ENCODE measurements at regions of chr6 and their contacts with region 1.

Region 1: GRCh38 chr6:158704181-158704822 is 54.4 kb downstream of the SYTL3 start:
- DNase-seq: no peak
- H3K4me3 ChIP-seq: peak overlapping the region; percentile 28 to 37
- H3K27ac ChIP-seq: peak overlapping the region; percentile 18
- H3K4me1 ChIP-seq: peaks cover 47% of the 10 kb centered on the region
- H3K27me3 ChIP-seq: no peaks in the 10 kb centered on the region
- CTCF ChIP-seq: peak; percentile 89 to 99 (median 94)
- POLR2A ChIP-seq: no peak

Region 2: DNA sequence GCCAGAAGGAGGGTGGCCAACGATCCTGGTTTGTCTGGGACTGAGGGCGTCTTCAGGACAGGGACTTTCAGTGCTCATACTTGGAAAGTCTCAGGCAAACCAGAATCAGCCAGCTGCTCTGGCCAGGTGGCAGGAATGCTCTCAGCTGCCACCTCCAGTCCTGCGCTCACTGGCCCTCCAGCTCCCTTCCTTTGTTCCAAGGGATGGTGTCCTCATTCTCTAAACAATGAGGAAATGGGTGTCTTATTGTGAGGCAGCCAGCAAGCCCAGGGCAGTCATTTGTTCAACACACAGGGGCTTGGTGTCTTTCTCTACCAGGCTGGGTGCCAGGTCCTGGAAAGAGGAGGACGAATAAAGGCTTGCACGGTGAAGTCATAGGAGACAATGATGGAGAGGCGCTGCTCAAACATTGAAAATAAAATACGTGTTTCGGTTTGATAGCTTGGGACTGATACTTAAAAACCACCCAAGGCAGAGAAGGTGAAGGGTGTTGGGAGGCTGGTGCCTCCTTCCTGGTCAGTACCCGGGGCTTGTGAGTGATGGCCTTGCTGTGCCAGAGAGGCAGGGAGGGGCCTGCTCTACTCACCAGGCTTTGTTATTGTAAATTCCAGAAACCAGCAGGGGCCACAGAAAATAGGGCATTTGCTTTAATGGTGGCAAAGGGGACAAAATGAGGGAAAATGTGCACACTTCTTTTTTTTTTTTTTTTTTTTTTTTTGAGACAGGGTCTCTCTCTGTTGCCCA is 155.7 kb before region 1 on chr6:
- intact Hi-C with region 1: no loop called
- DNase-seq: no peak
- H3K4me3 ChIP-seq: no peak overlapping the region
- H3K27ac ChIP-seq: no peak overlapping the region
- H3K4me1 ChIP-seq: no peaks in the 10 kb centered on the region
- H3K27me3 ChIP-seq: no peaks in the 10 kb centered on the region
- CTCF ChIP-seq: no peak
- POLR2A ChIP-seq: no peak

Region 3: DNA sequence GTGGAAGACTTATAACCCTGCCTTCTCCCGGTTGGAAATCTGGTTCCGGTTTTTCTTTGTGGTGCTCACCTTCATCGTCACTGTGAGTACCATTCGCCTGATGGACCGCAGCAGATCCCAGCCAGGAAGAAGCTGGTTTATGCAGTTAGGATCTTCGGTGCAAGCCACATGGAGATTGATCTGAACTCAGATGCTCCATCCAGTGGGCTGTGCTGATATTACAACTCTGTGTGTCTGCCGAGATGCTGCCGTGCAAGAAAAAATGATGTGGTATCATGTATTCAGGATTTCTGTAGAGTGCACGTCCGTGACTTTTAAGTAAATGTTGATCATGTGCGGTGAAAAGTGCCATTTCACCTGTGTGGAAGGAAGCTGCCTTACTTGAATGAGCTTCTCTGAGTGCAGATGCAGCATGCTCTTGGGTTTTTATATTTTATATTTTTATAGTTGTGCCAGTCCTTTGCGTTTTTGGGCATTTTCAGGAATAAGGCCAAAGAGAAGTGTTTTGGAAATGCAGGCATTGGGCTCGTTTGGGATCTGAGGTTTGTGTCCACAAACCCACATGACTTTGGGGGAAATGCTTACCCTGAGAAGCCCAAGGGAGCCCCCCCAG is 98.9 kb before region 1 on chr6:
- intact Hi-C with region 1: no loop called
- DNase-seq: peak in 1 of 2 donors; percentile 3
- H3K4me3 ChIP-seq: no peak overlapping the region
- H3K27ac ChIP-seq: no peak overlapping the region
- H3K4me1 ChIP-seq: no peaks in the 10 kb centered on the region
- H3K27me3 ChIP-seq: no peaks in the 10 kb centered on the region
- CTCF ChIP-seq: peak; percentile 60 to 71 (median 62)
- POLR2A ChIP-seq: no peak

Region 4: DNA sequence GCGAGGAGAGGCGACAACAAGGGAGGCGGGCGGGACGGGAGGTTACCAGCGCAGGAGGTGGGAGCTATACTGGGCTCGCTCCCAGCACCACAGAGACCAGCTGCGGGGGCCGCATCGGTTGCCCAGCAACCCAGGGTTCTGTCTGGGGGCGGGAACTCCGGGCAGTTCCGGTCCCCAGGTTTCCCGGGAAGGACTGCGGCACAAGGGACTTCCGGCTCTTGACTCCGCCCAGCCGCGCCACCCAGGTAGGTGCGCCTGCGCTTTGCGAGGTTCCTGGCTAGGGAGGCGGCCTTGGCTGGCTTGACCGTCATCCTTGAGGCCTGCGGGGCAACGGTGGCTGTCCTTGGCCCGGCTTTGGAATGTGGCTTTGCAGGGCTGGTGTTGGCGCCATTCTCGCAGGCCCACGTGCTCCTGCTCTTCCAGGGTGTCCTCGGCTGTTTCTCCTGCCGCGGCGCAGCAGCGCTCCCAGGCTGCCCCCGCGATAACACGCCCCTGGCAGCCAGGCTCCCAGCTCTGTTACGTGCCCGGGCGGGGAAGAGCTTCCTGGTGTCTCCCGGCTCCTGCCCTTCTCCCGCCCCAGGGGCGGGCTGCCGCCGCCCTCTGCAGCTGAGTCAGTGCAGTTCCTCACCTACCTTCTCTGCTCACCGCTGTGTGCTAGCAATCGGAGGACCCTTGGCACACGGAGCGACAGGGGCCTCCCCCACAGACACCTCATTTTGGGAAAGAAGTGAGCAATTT is 295.5 kb after region 1 on chr6 and contains the start of gene RSPH3:
- intact Hi-C with region 1: loop called (anchors 10 kb)
- DNase-seq: peak in 1 of 2 donors; percentile 94
- H3K4me3 ChIP-seq: peak within 1 kb of the TSS; percentile 55 to 75
- H3K27ac ChIP-seq: peak within 1 kb of the TSS; percentile 84
- H3K4me1 ChIP-seq: peaks cover 20% of the 10 kb centered on the region
- H3K27me3 ChIP-seq: no peaks in the 10 kb centered on the region
- CTCF ChIP-seq: peak in 2 of 3 experiments; percentile 1 to 49
- POLR2A ChIP-seq: peak in 1 of 2 donors; percentile 31
- total RNA-seq, gene RSPH3: 14.5 TPM